SK-N-SH (cell line): ENCODE measurements at regions of chr2 and their contacts with region 1.

Region 1: GRCh38 chr2:190088917-190089316 is 26.4 kb upstream of the MSTN start:
- DNase-seq: peak; percentile 43
- H3K4me3 ChIP-seq: peak overlapping the region in 1 of 2 experiments; percentile 22; a peak in 1 of 4 replicates
- H3K27ac ChIP-seq: no peak overlapping the region
- H3K4me1 ChIP-seq: peaks cover 0 to 3% of the 10 kb centered on the region in 2 experiments; a peak in 2 of 4 replicates
- H3K27me3 ChIP-seq: no peaks in the 10 kb centered on the region
- CTCF ChIP-seq: peak; percentile 84
- EP300 ChIP-seq: no peak
- RAD21 ChIP-seq: peak; percentile 93

Region 2: GRCh38 chr2:190105554-190105953 is 16.6 kb after region 1 on chr2:
- CTCF ChIA-PET with region 1: interaction called, 18 read pairs
- POLR2A ChIA-PET with region 1: no interaction called
- DNase-seq: peak; percentile 60
- H3K4me3 ChIP-seq: no peak overlapping the region
- H3K27ac ChIP-seq: peak overlapping the region in 1 of 2 experiments; percentile 40; a peak in 2 of 4 replicates
- H3K4me1 ChIP-seq: peaks cover 2 to 7% of the 10 kb centered on the region in 2 experiments; a peak in 2 of 4 replicates
- H3K27me3 ChIP-seq: no peaks in the 10 kb centered on the region
- CTCF ChIP-seq: no peak
- EP300 ChIP-seq: peak in 1 of 2 experiments; percentile 60; a peak in 1 of 4 replicates
- RAD21 ChIP-seq: no peak

Region 3: GRCh38 chr2:190180313-190181122 is 91.6 kb after region 1 on chr2:
- CTCF ChIA-PET with region 1: interaction called, 11 read pairs
- POLR2A ChIA-PET with region 1: no interaction called
- DNase-seq: peak; percentile 88
- H3K4me3 ChIP-seq: peak overlapping the region; percentile 62 to 66
- H3K27ac ChIP-seq: no peak overlapping the region; a peak in 1 of 4 replicates
- H3K4me1 ChIP-seq: peaks cover 0 to 12% of the 10 kb centered on the region in 2 experiments; a peak in 2 of 4 replicates
- H3K27me3 ChIP-seq: no peaks in the 10 kb centered on the region
- CTCF ChIP-seq: peak; percentile 45
- EP300 ChIP-seq: no peak
- RAD21 ChIP-seq: no peak

Region 4: DNA sequence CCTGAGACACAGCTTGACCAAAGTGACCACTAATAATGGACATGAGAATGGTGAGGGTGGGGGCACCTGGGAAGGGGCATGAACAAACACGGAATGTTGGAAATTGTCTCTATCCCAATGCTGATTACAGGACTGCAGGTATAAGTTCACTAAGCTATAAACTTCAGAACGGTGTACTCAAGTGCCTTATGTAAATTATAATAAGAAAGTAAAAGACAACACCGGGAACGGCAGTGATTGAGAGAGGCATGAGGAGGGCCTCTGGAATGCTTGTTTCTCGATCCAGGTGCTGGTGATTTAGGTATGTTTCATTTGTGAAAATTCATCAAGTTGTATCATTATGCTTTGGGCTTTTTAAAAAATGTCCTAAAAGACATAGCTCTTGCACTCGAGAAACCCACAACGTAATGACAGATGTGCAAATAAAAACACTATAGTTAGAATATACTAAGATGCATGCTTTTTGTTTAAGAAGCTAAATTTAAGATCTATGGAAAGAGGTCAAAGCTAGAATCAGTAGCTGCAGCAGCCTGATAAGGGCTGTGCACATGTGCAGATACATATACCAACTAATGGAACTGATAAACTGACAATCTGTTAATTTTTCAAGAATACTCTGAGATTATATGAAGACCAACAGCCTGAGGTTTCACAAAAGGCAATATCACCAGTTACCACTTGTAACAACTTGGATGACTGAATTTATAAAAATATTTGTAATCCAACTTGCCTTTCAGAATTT is 223.1 kb after region 1 on chr2:
- CTCF ChIA-PET with region 1: interaction called, 10 read pairs
- POLR2A ChIA-PET with region 1: no interaction called
- DNase-seq: no peak
- H3K4me3 ChIP-seq: no peak overlapping the region
- H3K27ac ChIP-seq: no peak overlapping the region
- H3K4me1 ChIP-seq: no peaks in the 10 kb centered on the region
- H3K27me3 ChIP-seq: no peaks in the 10 kb centered on the region
- CTCF ChIP-seq: no peak
- EP300 ChIP-seq: no peak
- RAD21 ChIP-seq: no peak